ENCODE measurements at regions of chr7 and their contacts with region 1.

Region 1: GRCh38 chr7:151782598-151783448 is 94.1 kb downstream of the PRKAG2 start:
- DNase-seq: peak; percentile 67
- H3K4me3 Mint-ChIP-seq: peak overlapping the region; percentile 61
- H3K27ac Mint-ChIP-seq: no peak overlapping the region
- H3K4me1 Mint-ChIP-seq: peaks cover 7% of the 10 kb centered on the region
- H3K27me3 Mint-ChIP-seq: no peaks in the 10 kb centered on the region

Region 2: GRCh38 chr7:151759591-151760042 is 23.2 kb before region 1 on chr7:
- CTCF ChIA-PET with region 1: interaction called, 25 read pairs
- POLR2A ChIA-PET with region 1: no interaction called
- DNase-seq: peak; percentile 61
- H3K4me3 Mint-ChIP-seq: no peak overlapping the region
- H3K27ac Mint-ChIP-seq: no peak overlapping the region
- H3K4me1 Mint-ChIP-seq: peaks cover 21% of the 10 kb centered on the region
- H3K27me3 Mint-ChIP-seq: no peaks in the 10 kb centered on the region

Region 3: GRCh38 chr7:151769188-151769841 is 13.5 kb before region 1 on chr7:
- CTCF ChIA-PET with region 1: interaction called, 32 read pairs
- POLR2A ChIA-PET with region 1: no interaction called
- DNase-seq: peak; percentile 40
- H3K4me3 Mint-ChIP-seq: peak overlapping the region; percentile 3
- H3K27ac Mint-ChIP-seq: peak overlapping the region; percentile 84
- H3K4me1 Mint-ChIP-seq: peaks cover 34% of the 10 kb centered on the region
- H3K27me3 Mint-ChIP-seq: no peaks in the 10 kb centered on the region

Region 4: GRCh38 chr7:151795168-151795811 is 12.5 kb after region 1 on chr7:
- CTCF ChIA-PET with region 1: interaction called, 55 read pairs
- POLR2A ChIA-PET with region 1: no interaction called
- DNase-seq: peak; percentile 72
- H3K4me3 Mint-ChIP-seq: no peak overlapping the region
- H3K27ac Mint-ChIP-seq: peak overlapping the region; percentile 67
- H3K4me1 Mint-ChIP-seq: peaks cover 15% of the 10 kb centered on the region
- H3K27me3 Mint-ChIP-seq: no peaks in the 10 kb centered on the region

Region 5: DNA sequence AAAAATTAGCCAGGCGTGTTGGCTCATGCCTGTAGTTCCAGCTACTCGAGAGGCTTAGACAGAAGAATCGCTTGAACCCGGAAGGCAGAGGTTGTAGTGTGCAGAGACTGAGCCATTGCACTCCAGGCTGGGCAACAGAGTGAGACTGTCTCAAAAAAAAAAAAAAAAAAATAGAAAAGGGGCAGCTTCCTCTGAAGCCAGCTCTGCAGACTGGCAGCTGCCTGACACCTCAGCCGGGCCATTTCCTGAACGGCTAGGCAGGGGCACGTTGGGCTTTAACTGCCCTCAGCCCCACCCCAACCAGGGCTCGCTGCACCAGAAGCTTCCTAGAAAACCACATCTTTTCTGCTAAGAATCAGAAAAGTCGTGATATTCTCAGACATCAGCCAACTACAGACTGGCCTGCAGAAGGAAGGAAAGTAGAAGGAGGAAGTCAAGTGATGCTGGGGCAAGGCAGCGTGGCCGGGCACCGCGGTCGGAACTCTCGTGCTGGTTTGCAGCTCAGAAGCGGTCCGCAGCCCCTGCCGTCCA is 56.1 kb after region 1 on chr7:
- CTCF ChIA-PET with region 1: interaction called, 16 read pairs
- POLR2A ChIA-PET with region 1: interaction called, 3 read pairs
- DNase-seq: peak; percentile 83
- H3K4me3 Mint-ChIP-seq: peak overlapping the region; percentile 41
- H3K27ac Mint-ChIP-seq: peak overlapping the region; percentile 89
- H3K4me1 Mint-ChIP-seq: peaks cover 33% of the 10 kb centered on the region
- H3K27me3 Mint-ChIP-seq: no peaks in the 10 kb centered on the region

Region 6: DNA sequence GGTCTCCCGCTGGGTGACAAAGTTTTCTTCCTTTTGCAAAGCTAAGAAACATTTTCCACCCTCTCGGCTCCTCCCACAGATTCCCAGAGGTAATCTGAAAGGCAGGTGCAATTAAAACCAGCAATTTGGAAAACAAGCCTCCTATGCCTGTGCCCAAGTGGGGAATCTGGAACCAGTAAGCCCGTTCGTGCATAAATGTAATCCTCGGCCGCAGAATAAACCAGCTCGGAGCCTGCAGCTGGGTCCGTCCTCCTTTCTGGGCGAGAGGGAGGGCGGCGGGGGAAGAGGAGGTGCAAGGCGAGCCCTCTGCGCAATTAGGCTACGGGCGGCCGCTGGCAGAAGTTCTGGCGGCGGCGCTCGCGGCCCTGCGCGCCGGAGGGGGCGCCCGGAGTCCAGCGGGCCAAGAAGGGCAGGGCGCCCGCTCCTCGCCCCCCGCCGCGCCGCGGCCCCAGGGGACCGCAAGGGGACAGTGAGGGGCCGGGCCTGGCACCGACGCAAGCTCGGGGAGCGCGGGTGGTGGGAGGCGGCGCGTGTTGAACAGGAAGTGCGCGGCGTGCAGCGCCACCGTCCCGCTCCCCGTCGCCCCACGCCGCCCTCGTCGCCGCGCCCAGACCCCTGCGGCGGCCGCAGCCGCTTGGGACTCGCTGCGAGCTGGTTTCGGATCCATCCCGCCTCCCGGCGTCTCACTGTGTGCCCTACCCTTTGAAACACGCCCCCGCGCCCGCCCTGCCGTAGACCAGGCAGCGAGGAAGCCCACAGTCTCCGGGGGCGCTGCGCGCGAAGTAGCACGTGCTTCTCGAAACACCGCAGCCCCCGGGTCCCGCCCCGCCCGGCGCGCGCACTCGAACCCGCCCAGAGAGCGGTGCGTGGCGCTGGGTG is 94.3 kb after region 1 on chr7 and contains the start of gene PRKAG2:
- CTCF ChIA-PET with region 1: interaction called, 11 read pairs
- POLR2A ChIA-PET with region 1: interaction called, 3 read pairs
- DNase-seq: peak; percentile 70
- H3K4me3 Mint-ChIP-seq: peak within 1 kb of the TSS; percentile 89
- H3K27ac Mint-ChIP-seq: peak within 1 kb of the TSS; percentile 69
- H3K4me1 Mint-ChIP-seq: peaks cover 11% of the 10 kb centered on the region
- H3K27me3 Mint-ChIP-seq: peaks cover 3% of the 10 kb centered on the region
- total RNA-seq, gene PRKAG2: 25.4 to 33.7 TPM

Measured in activated CD4-positive, alpha-beta memory T cell treated with anti-CD3 and anti-CD28 coated beads, Interleukin-2, amount 10 ng/mL, durations not matched to agents 7 days and 5 days (primary cell).